Left ventricle myocardium inferior (tissue), 1 donor: ENCODE measurements at regions of chr1 and their contacts with region 1.

Region 1: GRCh38 chr1:119617751-119618691 is 30.0 kb downstream of the ZNF697 start:
- DNase-seq: peak; percentile 33
- H3K4me3 ChIP-seq: no peak overlapping the region
- H3K27ac ChIP-seq: peak overlapping the region; percentile 44
- H3K4me1 ChIP-seq: peaks cover 50% of the 10 kb centered on the region
- H3K27me3 ChIP-seq: no peaks in the 10 kb centered on the region
- CTCF ChIP-seq: no peak

Region 2: DNA sequence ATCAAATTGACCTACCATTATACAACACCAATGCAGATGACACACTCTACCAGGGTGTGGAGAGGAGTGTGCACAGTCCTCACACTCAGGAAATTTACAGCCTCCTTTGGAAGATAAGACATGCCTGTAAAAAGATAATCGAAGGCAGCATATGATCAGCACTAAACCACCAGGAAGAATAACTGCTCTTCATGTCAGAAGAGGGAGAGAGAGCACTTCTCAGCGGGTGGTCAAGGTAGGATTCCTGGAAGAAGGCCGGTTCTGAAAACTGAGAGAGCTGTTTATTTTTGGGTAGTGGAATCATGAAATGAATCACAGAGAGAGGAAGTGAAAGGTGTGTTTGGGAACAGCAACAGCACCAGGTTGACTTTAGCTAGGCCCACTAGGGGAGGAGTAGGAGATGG is 44.0 kb after region 1 on chr1:
- intact Hi-C with region 1: loop called (anchors 5 kb)
- DNase-seq: no peak
- H3K4me3 ChIP-seq: no peak overlapping the region
- H3K27ac ChIP-seq: no peak overlapping the region
- H3K4me1 ChIP-seq: peaks cover 6% of the 10 kb centered on the region
- H3K27me3 ChIP-seq: no peaks in the 10 kb centered on the region
- CTCF ChIP-seq: no peak

Region 3: GRCh38 chr1:119675349-119676345 is 57.6 kb after region 1 on chr1:
- intact Hi-C with region 1: loop called (anchors 5 kb)
- DNase-seq: peak; percentile 38
- H3K4me3 ChIP-seq: peak overlapping the region; percentile 54
- H3K27ac ChIP-seq: peak overlapping the region; percentile 39
- H3K4me1 ChIP-seq: peaks cover 11% of the 10 kb centered on the region
- H3K27me3 ChIP-seq: no peaks in the 10 kb centered on the region
- CTCF ChIP-seq: peak; percentile 93